ENCODE measurements at regions of chr12 and their contacts with region 1.

Region 1: DNA sequence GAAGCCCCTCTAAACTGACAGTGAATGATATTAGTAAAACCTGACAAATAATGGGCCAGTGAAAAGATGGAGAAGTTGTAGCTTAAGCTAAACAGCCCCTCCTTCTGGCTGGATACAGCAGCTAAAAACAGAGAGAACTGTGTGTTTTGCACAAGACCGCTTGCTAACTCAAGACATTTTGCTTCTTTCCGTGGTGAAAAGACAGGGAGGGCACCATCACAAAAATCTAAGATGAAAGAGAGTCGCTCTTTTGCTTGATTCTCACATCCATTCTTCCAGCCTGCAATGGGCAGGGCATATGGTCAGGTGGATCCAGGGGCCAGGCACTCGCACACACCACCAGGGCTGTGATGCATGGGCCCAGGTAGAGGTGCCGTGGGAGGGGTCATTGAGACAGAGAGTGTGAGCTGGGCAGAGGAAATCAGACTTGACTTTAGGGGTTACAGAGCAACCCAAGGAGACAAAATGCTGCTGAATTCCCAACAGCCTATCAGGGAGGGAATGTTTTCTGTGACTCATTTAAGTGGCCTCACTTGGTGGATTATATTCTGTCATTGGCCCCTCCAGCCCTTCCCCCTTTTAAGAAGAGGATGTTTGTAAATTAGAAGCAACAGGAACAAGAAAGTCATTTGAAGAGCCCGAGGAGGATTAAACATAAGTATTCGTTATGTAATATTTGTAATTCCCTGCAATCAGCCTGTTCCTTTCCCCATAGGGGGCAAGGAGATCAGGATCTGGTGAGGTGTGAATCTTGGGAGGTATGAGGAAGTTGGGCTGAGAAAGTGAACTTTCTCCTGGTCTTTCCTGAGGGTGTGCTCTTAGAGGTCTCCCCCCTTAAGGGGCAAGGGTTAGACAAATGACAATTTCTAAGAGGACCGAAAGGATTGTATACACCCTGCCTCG is 12.3 kb downstream of the EMP1 start:
- DNase-seq: peak in 12 of 42 donors; percentile 18 to 69 (median 34)

Region 2: GRCh38 chr12:12909995-12910391 is 298.8 kb before region 1 on chr12:
- intact Hi-C with region 1: loop called (anchors 5 kb)
- DNase-seq: no peak

Region 3: DNA sequence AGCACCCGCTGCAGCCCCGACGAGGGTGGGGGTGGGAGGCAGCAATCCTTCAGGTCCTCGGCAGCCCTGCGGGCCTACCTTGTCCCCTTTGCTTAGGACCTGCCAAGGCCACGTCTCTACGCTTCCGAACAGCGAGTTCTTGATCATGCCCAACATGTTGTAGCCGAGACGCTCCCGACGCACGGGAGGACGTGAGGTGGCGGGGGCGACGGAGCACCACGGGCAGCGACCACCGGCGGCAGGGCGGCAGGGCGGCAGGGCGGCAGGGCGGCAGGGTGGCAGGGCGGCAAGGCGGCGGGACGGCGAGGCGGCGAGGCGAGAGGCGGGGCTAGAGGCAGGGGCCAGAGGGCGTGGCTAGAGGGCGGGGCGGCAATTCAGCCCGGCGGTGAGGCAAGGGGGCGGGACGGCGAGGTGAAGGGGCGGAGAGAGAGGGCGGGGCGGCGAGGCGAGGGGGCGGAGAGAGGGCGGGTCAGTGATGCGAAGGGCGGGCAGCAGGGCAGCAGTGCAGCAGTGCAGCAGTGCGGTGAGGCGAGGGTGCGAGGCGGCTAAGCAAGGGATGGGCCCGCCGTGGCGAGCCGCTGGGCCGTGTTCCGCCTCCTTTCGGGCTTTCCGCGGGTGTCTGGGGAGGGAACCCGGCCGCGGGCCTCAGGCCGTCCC is 208.7 kb before region 1 on chr12 and contains the start of gene HEBP1:
- intact Hi-C with region 1: loop called (anchors 10 kb)
- DNase-seq: peak; percentile 87 to 100 (median 98)

Region 4: GRCh38 chr12:13592063-13592942 is 383.5 kb after region 1 on chr12:
- intact Hi-C with region 1: no loop called
- DNase-seq: peak in 5 of 42 donors; percentile 11 to 46 (median 23)

Measured in head of caudate nucleus (tissue), 42 donors.